Calu3 (cell line): ENCODE measurements at regions of chrX and their contacts with region 1.

Region 1: DNA sequence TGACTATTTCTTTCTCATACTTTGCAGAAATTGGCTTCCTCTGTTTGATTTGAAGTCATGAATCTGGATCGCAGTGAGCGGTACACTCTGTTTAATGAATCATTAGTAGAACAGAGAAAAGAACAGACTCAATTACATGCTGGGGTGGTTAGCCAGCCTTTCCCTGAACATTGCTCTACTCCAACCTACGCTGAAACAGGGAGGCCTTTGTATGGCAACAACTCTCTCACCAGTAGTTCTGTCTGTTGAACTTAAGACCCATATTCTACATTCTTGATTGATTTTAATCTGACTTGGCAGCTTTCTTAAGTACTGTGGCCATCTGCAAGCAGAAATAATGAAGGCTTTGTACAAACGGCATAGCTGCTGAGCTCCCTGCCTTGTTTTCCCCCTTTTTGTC is 19.0 kb upstream of the AP1S2 start:
- DNase-seq: peak; percentile 59
- H3K4me3 Mint-ChIP-seq: no peak overlapping the region
- H3K27ac Mint-ChIP-seq: peak overlapping the region; percentile 84
- H3K4me1 Mint-ChIP-seq: peaks cover 30% of the 10 kb centered on the region
- H3K27me3 Mint-ChIP-seq: no peaks in the 10 kb centered on the region
- CTCF ChIP-seq: no peak

Region 2: GRCh38 chrX:15854712-15855567 is 18.6 kb before region 1 on chrX and contains the start of gene AP1S2:
- CTCF ChIA-PET with region 1: interaction called, 9 read pairs
- intact Hi-C with region 1: loop called (anchors 2 kb)
- DNase-seq: peak; percentile 97
- H3K4me3 Mint-ChIP-seq: peak within 1 kb of the TSS; percentile 94
- H3K27ac Mint-ChIP-seq: peak within 1 kb of the TSS; percentile 94
- H3K4me1 Mint-ChIP-seq: peaks cover 26% of the 10 kb centered on the region
- H3K27me3 Mint-ChIP-seq: no peaks in the 10 kb centered on the region
- CTCF ChIP-seq: no peak
- total RNA-seq, gene AP1S2: 41.4 and 57.5 TPM in 2 replicates